ENCODE measurements at regions of chr11 and their contacts with region 1.

Region 1: GRCh38 chr11:43579171-43579918 is 101.2 kb upstream of the HSD17B12 start:
- DNase-seq: peak; percentile 74
- ATAC-seq: peak; percentile 19
- H3K4me3 Mint-ChIP-seq: peak overlapping the region; percentile 86
- H3K27ac Mint-ChIP-seq: no peak overlapping the region
- H3K4me1 Mint-ChIP-seq: peaks cover 55% of the 10 kb centered on the region
- H3K27me3 Mint-ChIP-seq: peaks cover 99% of the 10 kb centered on the region
- CTCF ChIP-seq: no peak

Region 2: GRCh38 chr11:43515090-43515489 is 64.3 kb before region 1 on chr11:
- CTCF ChIA-PET with region 1: interaction called, 302 read pairs
- POLR2A ChIA-PET with region 1: no interaction called
- DNase-seq: peak; percentile 57
- ATAC-seq: peak; percentile 94
- H3K4me3 Mint-ChIP-seq: no peak overlapping the region
- H3K27ac Mint-ChIP-seq: no peak overlapping the region
- H3K4me1 Mint-ChIP-seq: 0 out of 2 replicates have a peak, but pooled peaks cover 3% of the 10 kb centered on the region
- H3K27me3 Mint-ChIP-seq: peaks cover 30% of the 10 kb centered on the region
- CTCF ChIP-seq: no peak

Region 3: DNA sequence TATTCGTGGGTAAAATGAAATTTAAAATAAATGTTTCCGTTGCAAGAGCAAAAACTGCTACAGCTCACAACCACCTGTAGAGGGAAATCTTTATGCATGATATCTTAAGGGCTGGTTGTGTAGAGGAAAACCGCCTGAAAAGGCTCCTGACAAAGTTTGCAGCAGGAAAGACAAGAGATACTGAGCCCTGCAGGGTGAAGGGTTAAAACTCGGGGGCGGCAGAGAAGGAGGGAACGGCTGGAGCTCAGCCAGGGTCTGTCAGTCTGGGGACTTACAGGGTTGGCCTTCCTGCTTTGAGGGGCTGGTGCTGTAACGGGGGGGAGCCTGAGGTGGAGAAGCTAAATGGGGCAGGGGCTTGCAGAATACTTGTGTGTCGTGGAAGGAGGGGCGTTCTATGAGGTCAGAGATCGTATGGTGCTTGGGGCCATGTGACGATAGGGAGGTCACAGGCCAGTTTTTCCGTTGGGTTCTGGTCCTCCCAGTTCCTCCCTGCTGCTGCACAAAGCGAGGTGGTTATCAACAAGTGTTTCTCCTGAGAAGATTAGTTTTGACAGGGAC is 21.7 kb before region 1 on chr11:
- CTCF ChIA-PET with region 1: interaction called, 106 read pairs
- POLR2A ChIA-PET with region 1: interaction called, 4 read pairs
- DNase-seq: no peak
- ATAC-seq: peak; percentile 63
- H3K4me3 Mint-ChIP-seq: peak overlapping the region; percentile 69
- H3K27ac Mint-ChIP-seq: no peak overlapping the region
- H3K4me1 Mint-ChIP-seq: peaks cover 58% of the 10 kb centered on the region
- H3K27me3 Mint-ChIP-seq: peaks cover 38% of the 10 kb centered on the region
- CTCF ChIP-seq: no peak

Region 4: DNA sequence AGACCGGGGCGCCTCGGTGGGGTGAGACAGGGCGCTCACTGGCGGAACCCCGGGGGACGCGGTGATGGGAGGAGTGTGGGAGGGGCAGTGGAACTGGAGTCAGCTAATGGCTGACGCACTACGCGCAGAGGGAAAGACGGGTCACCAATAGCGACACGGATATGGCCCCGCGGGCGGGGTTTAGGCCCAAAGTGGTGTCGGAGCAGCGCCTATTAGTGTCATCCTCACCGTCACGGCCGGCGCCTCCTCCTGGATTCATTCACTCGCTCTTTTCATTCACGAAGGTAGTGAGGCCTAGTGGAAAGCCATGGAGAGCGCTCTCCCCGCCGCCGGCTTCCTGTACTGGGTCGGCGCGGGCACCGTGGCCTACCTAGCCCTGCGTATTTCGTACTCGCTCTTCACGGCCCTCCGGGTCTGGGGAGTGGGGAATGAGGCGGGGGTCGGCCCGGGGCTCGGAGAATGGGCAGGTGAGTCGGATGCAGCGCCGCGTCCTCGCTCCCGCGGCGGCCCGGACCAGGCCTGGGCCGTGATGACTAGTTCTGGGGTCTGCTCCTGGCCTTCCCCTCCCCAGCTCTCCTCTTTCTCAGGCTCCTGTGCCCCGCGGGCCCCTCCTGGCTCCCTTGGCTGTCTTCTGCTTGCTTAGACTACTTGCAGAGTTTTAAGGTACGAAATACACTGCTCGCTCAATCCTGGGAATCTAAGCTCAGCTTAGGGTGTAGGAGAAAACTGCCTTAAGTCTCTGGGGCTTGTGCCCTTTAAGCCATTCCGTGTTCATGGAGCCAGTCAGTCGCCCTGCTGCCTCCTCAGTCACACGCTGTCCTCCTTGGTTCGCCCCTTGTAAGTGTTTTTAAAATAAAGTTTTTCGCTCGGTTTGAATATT is 101.4 kb after region 1 on chr11 and contains the start of gene HSD17B12:
- CTCF ChIA-PET with region 1: interaction called, 11 read pairs
- POLR2A ChIA-PET with region 1: interaction called, 4 read pairs
- DNase-seq: peak; percentile 100
- ATAC-seq: peak; percentile 98
- H3K4me3 Mint-ChIP-seq: peak within 1 kb of the TSS; percentile 96
- H3K27ac Mint-ChIP-seq: peak within 1 kb of the TSS; percentile 99
- H3K4me1 Mint-ChIP-seq: peaks cover 36% of the 10 kb centered on the region
- H3K27me3 Mint-ChIP-seq: peaks cover 11% of the 10 kb centered on the region
- CTCF ChIP-seq: no peak
- total RNA-seq, gene HSD17B12: 143 to 149 TPM (median 149 TPM) in 3 replicates

Region 5: DNA sequence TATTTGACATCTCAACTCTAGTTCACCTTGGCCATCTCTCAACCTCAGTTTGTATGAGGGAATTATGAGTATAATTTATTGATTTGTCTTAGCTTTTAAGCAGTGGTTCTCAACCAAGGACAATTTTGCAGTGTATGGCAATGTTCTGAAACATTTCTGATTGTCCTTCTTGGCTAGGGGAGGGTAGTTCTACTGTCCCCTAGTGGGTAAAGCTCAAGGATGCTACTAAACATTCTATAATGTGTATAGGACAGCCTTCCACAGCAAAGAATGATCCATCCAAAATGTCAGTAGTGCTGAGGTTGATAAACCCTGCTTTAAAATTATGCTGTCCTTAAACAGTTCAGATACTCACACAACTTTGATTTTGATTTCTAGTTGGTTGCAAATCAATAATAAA is 223.2 kb after region 1 on chr11:
- CTCF ChIA-PET with region 1: interaction called, 11 read pairs
- POLR2A ChIA-PET with region 1: no interaction called
- DNase-seq: no peak
- ATAC-seq: peak; percentile 52; the same call in 1 of the 2 replicates
- H3K4me3 Mint-ChIP-seq: no peak overlapping the region
- H3K27ac Mint-ChIP-seq: no peak overlapping the region
- H3K4me1 Mint-ChIP-seq: no peaks in the 10 kb centered on the region
- H3K27me3 Mint-ChIP-seq: no peaks in the 10 kb centered on the region
- CTCF ChIP-seq: no peak